Activated B cell treated with CpG ODN at 0.5 μM for 24 hours (primary cell): ENCODE measurements at regions of chr9 and their contacts with region 1.

Region 1: GRCh38 chr9:112750111-112750767 is at the start of gene SNX30:
- DNase-seq: peak; percentile 90
- ATAC-seq: peak; percentile 90
- H3K4me3 Mint-ChIP-seq: peak within 1 kb of the TSS; percentile 93
- H3K27ac Mint-ChIP-seq: peak within 1 kb of the TSS; percentile 94
- H3K4me1 Mint-ChIP-seq: peaks cover 42% of the 10 kb centered on the region
- H3K27me3 Mint-ChIP-seq: no peaks in the 10 kb centered on the region
- CTCF ChIP-seq: no peak
- total RNA-seq, gene SNX30: 6.1 and 6.5 TPM in 2 replicates

Region 2: GRCh38 chr9:112486221-112487007 is 263.8 kb before region 1 on chr9 and contains the start of gene KIAA1958:
- CTCF ChIA-PET with region 1: no interaction called
- POLR2A ChIA-PET with region 1: interaction called, 4 read pairs
- intact Hi-C with region 1: loop called (anchors 1 kb)
- DNase-seq: peak; percentile 75
- ATAC-seq: peak; percentile 89
- H3K4me3 Mint-ChIP-seq: peak within 1 kb of the TSS; percentile 97
- H3K27ac Mint-ChIP-seq: peak within 1 kb of the TSS; percentile 89
- H3K4me1 Mint-ChIP-seq: peaks cover 19% of the 10 kb centered on the region
- H3K27me3 Mint-ChIP-seq: no peaks in the 10 kb centered on the region
- CTCF ChIP-seq: no peak
- total RNA-seq, gene KIAA1958: 5.8 and 7.4 TPM in 2 replicates

Region 3: GRCh38 chr9:112774006-112774996 is 24.1 kb after region 1 on chr9:
- CTCF ChIA-PET with region 1: no interaction called
- POLR2A ChIA-PET with region 1: interaction called, 3 read pairs
- intact Hi-C with region 1: loop called (anchors 1 kb)
- DNase-seq: no peak
- ATAC-seq: peak; percentile 11
- H3K4me3 Mint-ChIP-seq: peak overlapping the region; percentile 13
- H3K27ac Mint-ChIP-seq: peak overlapping the region; percentile 59
- H3K4me1 Mint-ChIP-seq: peaks cover 57% of the 10 kb centered on the region
- H3K27me3 Mint-ChIP-seq: no peaks in the 10 kb centered on the region
- CTCF ChIP-seq: no peak

Region 4: DNA sequence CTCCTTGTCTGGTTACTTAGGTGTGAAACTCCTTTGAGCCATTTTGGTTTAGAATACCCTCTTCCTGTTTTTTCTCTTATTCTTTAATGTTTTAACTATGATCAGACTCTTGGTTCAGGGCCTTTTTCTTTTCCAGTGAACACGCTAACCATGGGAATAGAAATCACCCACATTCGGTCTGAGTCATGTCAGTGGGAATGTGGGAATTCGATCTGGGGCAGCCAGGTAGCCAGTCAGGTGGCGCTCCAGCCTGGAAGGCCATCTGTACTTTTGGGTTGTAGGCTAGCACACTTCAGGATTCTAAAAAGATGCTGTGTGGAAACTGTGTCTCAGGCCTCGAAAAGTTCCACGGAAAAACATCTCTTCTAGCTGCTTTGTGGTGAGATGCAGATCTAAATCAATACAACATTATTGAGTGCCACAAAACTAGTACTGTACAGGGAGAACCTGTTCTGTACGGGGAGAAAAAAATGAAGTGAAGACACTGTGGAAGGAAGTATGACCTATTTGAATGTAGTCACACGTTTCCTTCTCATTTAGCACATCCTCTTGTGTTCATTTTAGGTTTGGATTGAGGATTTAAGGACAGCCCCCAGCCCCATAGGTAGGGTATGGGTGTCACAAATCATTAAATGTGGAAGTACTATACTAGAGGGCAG is 36.7 kb after region 1 on chr9:
- CTCF ChIA-PET with region 1: no interaction called
- POLR2A ChIA-PET with region 1: no interaction called
- intact Hi-C with region 1: loop called (anchors 2 kb)
- DNase-seq: no peak
- ATAC-seq: peak; percentile 82
- H3K4me3 Mint-ChIP-seq: peak overlapping the region; percentile 66
- H3K27ac Mint-ChIP-seq: peak overlapping the region; percentile 77
- H3K4me1 Mint-ChIP-seq: peaks cover 35% of the 10 kb centered on the region
- H3K27me3 Mint-ChIP-seq: no peaks in the 10 kb centered on the region
- CTCF ChIP-seq: no peak

Region 5: DNA sequence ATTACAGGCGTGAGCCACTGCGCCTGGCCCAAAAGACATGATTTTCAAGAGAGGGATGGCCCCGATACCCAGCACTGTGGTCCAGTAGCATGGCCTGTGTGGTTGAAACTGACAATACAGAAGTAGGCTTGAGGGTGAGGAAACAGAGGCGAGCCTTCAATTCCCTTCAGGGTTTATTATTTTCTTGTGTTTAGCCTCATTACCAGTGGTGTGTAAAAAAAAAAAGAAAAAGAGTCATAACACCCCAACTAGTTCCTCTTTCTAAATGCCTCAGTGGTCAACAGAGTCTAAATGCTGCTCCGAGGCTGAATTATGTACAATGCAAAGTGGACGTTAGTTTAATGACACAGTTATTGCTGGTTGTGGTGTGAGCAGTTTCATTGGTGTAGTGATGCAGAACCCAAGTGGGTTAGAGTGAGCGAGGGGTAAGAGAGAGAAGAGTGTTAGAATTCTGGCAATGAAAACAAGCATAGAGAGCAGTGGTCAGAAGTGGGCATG is 59.2 kb after region 1 on chr9:
- CTCF ChIA-PET with region 1: no interaction called
- POLR2A ChIA-PET with region 1: interaction called, 4 read pairs
- intact Hi-C with region 1: loop called (anchors 1 kb)
- DNase-seq: no peak
- ATAC-seq: peak; percentile 93
- H3K4me3 Mint-ChIP-seq: no peak overlapping the region
- H3K27ac Mint-ChIP-seq: no peak overlapping the region
- H3K4me1 Mint-ChIP-seq: peaks cover 23% of the 10 kb centered on the region
- H3K27me3 Mint-ChIP-seq: peaks cover 10% of the 10 kb centered on the region
- CTCF ChIP-seq: no peak